ENCODE measurements at regions of chr2 and their contacts with region 1.

Region 1: GRCh38 chr2:84781942-84782716 is 98.8 kb downstream of the TRABD2A start:
- DNase-seq: peak; percentile 34 to 79
- ATAC-seq: peak; percentile 86 to 89 (median 86)
- H3K4me3 ChIP-seq: no peak overlapping the region
- H3K4me3 Mint-ChIP-seq: peak overlapping the region; percentile 81
- H3K27ac ChIP-seq: peak overlapping the region; percentile 71
- H3K27ac Mint-ChIP-seq: peak overlapping the region; percentile 73 to 95
- H3K4me1 ChIP-seq: peaks cover 24% of the 10 kb centered on the region
- H3K4me1 Mint-ChIP-seq: peaks cover 69 to 71% of the 10 kb centered on the region in 2 donors
- H3K27me3 ChIP-seq: no peaks in the 10 kb centered on the region
- H3K27me3 Mint-ChIP-seq: no peaks in the 10 kb centered on the region
- CTCF ChIP-seq: no peak

Region 2: DNA sequence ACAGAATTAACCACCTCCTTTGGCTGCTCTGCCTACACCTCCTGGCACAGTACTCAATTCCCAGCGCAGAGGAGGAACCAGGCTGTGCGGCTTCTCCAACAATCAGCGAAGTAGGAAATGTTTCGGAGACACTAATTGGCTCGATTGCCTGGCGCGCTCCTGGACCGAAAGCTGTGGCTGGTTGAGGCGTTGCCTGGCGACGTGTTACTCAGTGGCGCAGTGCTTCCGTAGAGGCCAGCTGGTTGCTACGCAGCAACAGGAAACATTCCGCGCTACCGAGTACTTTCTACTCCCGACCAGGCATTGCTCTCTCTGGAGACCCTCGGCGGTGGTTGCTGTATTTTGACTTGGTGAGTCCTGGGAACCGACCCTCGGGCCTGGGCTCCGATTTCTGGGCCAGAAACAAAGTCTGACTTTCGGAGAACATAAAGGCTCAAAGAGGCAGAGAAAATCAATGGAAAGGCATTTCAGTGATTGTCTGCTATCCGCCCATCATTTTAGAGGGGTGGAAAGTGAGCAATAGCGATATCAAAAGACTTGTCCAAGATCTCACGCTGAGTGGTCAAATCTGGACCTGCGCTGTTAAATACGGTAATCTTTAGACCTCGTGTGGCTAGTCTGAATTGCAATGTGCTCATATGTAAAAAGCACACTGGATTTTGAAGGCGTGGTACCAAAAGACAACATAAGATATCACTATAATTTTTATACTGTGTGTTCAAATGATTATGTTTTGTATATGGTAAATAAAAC is 265.7 kb before region 1 on chr2 and contains the start of gene DNAH6:
- intact Hi-C with region 1: loop called (anchors 5 kb)
- DNase-seq: peak; percentile 78 to 95
- ATAC-seq: peak; percentile 96 to 99 (median 97)
- H3K4me3 ChIP-seq: peak within 1 kb of the TSS; percentile 25
- H3K4me3 Mint-ChIP-seq: peak within 1 kb of the TSS; percentile 75
- H3K27ac ChIP-seq: no peak within 1 kb of the TSS
- H3K27ac Mint-ChIP-seq: peak within 1 kb of the TSS; percentile 44 to 66
- H3K4me1 ChIP-seq: peaks cover 10% of the 10 kb centered on the region
- H3K4me1 Mint-ChIP-seq: peaks cover 13 to 15% of the 10 kb centered on the region in 2 donors
- H3K27me3 ChIP-seq: peaks cover 3% of the 10 kb centered on the region
- H3K27me3 Mint-ChIP-seq: peaks cover 30 to 49% of the 10 kb centered on the region in 2 donors
- CTCF ChIP-seq: no peak
- total RNA-seq, gene DNAH6: 0.05 to 0.60 (median 0.32) TPM

Region 3: DNA sequence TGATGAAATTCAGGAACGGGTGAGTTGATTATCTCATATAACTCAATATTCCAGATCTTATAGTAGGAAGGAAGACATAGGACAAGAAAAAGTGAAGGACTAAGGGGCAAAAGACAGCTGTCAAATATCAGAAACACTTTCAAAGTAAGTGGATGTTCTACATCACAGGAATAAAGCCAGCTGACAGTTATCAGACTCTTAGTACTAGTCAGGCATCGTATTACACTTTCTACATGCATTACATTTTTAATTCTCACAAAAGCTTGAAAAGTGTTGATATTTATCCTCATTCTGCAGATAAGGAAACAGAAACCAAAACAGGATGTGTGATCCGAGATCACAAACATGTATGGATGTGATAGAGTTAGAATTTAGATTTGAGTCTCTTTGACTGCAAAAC is 202.5 kb before region 1 on chr2:
- intact Hi-C with region 1: no loop called
- DNase-seq: no peak
- ATAC-seq: no peak
- H3K4me3 ChIP-seq: no peak overlapping the region
- H3K4me3 Mint-ChIP-seq: no peak overlapping the region
- H3K27ac ChIP-seq: no peak overlapping the region
- H3K27ac Mint-ChIP-seq: no peak overlapping the region
- H3K4me1 ChIP-seq: no peaks in the 10 kb centered on the region
- H3K4me1 Mint-ChIP-seq: no peaks in the 10 kb centered on the region
- H3K27me3 ChIP-seq: no peaks in the 10 kb centered on the region
- H3K27me3 Mint-ChIP-seq: peaks cover 0 to 2% of the 10 kb centered on the region in 2 donors
- CTCF ChIP-seq: no peak

Region 4: DNA sequence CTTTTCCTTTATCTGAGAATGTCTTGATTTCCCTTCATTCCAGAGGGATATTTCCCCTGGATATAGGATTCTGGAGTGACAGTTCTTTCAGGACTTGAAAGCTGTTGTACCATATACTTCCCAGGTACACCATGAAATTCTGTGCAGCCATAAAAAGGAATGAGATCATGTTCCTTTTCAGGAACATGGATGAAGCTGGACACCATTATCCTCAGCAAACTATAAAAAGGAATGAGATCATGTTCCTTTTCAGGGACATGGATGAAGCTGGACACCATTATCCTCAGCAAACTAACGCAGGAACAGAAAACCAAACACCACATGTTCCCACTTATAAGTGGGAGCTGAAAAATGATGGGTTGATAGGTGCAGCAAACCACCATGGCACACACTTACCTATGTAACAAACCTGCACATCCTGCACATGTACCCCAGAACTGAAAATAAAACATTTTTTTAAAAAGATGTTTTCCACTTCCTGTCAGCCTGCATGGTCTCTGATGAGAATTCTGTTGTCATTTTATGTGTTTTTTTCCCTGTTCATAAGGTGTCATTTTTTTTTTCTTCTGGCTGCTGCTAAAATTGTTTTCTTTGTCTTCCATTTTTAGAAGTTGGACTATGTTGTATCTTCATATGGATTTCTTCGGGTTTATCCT is 132.5 kb before region 1 on chr2:
- intact Hi-C with region 1: loop called (anchors 5 kb)
- DNase-seq: peak in 1 of 2 donors; percentile 28
- ATAC-seq: no peak
- H3K4me3 ChIP-seq: no peak overlapping the region
- H3K4me3 Mint-ChIP-seq: peak overlapping the region; percentile 14
- H3K27ac ChIP-seq: no peak overlapping the region
- H3K27ac Mint-ChIP-seq: peak overlapping the region; percentile 27 to 73
- H3K4me1 ChIP-seq: peaks cover 16% of the 10 kb centered on the region
- H3K4me1 Mint-ChIP-seq: peaks cover 56 to 59% of the 10 kb centered on the region in 2 donors
- H3K27me3 ChIP-seq: no peaks in the 10 kb centered on the region
- H3K27me3 Mint-ChIP-seq: no peaks in the 10 kb centered on the region
- CTCF ChIP-seq: no peak

Region 5: GRCh38 chr2:84846041-84846663 is 64.0 kb after region 1 on chr2:
- intact Hi-C with region 1: loop called (anchors 2 kb)
- DNase-seq: peak in 1 of 2 donors; percentile 82
- ATAC-seq: peak; percentile 63 to 72 (median 65)
- H3K4me3 ChIP-seq: no peak overlapping the region
- H3K4me3 Mint-ChIP-seq: peak overlapping the region; percentile 57
- H3K27ac ChIP-seq: peak overlapping the region; percentile 83
- H3K27ac Mint-ChIP-seq: peak overlapping the region; percentile 88 to 95
- H3K4me1 ChIP-seq: peaks cover 83% of the 10 kb centered on the region
- H3K4me1 Mint-ChIP-seq: peaks cover 66 to 68% of the 10 kb centered on the region in 2 donors
- H3K27me3 ChIP-seq: no peaks in the 10 kb centered on the region
- H3K27me3 Mint-ChIP-seq: no peaks in the 10 kb centered on the region
- CTCF ChIP-seq: no peak

Region 6: GRCh38 chr2:84881581-84882414 is 99.7 kb after region 1 on chr2:
- intact Hi-C with region 1: loop called (anchors 10 kb)
- DNase-seq: peak; percentile 76 to 93
- ATAC-seq: peak; percentile 87 to 89 (median 88)
- H3K4me3 ChIP-seq: peak overlapping the region; percentile 55
- H3K4me3 Mint-ChIP-seq: peak overlapping the region; percentile 98
- H3K27ac ChIP-seq: peak overlapping the region; percentile 52
- H3K27ac Mint-ChIP-seq: peak overlapping the region; percentile 21 to 71
- H3K4me1 ChIP-seq: peaks cover 29% of the 10 kb centered on the region
- H3K4me1 Mint-ChIP-seq: peaks cover 34 to 37% of the 10 kb centered on the region in 2 donors
- H3K27me3 ChIP-seq: peaks cover 8% of the 10 kb centered on the region
- H3K27me3 Mint-ChIP-seq: peaks cover 9 to 24% of the 10 kb centered on the region in 2 donors
- CTCF ChIP-seq: peak; percentile 77

Region 7: DNA sequence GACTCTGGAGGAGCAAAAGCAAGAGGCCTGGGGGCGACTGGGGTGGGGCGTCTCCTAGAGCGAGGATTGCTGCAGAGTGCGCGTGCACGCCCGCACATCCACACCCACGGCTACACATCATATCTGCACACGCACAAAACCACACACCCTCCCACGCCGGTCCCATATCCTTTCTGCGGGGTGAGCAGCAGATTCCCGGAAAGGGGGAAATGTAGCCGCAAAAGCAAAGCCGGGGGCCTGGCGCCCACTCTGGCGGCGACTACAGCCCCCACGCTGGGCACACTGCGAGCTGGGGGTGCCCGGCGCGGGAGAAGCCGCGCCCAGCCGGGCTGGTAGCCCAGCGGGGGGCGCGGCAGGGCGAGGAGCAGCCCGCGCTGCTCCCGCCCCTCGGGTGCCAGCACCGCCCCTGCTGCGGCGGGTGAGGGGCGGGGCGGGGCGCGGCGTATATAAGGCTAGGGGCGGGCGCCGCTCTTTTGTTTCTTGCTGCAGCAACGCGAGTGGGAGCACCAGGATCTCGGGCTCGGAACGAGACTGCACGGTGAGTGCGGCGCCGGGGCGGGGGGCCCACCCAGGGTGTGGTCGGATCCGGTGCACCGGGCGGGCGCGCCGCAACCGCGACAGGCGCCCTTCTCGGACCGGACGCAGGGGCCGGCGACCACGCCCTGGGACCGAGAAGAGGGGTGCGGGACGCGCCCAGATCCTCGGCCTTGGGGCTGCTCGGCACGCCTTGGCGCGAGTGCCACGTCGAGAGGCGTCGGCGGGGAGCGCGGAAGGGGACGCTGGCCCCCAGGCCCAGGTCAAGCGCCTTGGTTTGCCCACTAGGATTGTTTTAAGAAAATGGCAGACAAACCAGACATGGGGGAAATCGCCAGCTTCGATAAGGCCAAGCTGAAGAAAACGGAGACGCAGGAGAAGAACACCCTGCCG is 123.3 kb after region 1 on chr2 and contains the start of gene TMSB10:
- intact Hi-C with region 1: loop called (anchors 5 kb)
- DNase-seq: peak; percentile 88 to 92
- ATAC-seq: peak; percentile 83 to 89 (median 84)
- H3K4me3 ChIP-seq: peak within 1 kb of the TSS; percentile 83
- H3K4me3 Mint-ChIP-seq: peak within 1 kb of the TSS; percentile 94
- H3K27ac ChIP-seq: peak within 1 kb of the TSS; percentile 81
- H3K27ac Mint-ChIP-seq: peak within 1 kb of the TSS; percentile 85 to 86
- H3K4me1 ChIP-seq: peaks cover 52% of the 10 kb centered on the region
- H3K4me1 Mint-ChIP-seq: peaks cover 55 to 76% of the 10 kb centered on the region in 2 donors
- H3K27me3 ChIP-seq: no peaks in the 10 kb centered on the region
- H3K27me3 Mint-ChIP-seq: no peaks in the 10 kb centered on the region
- CTCF ChIP-seq: no peak
- total RNA-seq, gene TMSB10: 1,247 to 1,683 (median 1,557) TPM

Region 8: GRCh38 chr2:85199698-85200097 is 417.6 kb after region 1 on chr2:
- intact Hi-C with region 1: no loop called
- DNase-seq: no peak
- ATAC-seq: no peak
- H3K4me3 ChIP-seq: no peak overlapping the region
- H3K4me3 Mint-ChIP-seq: no peak overlapping the region
- H3K27ac ChIP-seq: no peak overlapping the region
- H3K27ac Mint-ChIP-seq: no peak overlapping the region
- H3K4me1 ChIP-seq: no peaks in the 10 kb centered on the region
- H3K4me1 Mint-ChIP-seq: no peaks in the 10 kb centered on the region
- H3K27me3 ChIP-seq: no peaks in the 10 kb centered on the region
- H3K27me3 Mint-ChIP-seq: peaks cover 9 to 13% of the 10 kb centered on the region in 2 donors
- CTCF ChIP-seq: no peak

Region 9: DNA sequence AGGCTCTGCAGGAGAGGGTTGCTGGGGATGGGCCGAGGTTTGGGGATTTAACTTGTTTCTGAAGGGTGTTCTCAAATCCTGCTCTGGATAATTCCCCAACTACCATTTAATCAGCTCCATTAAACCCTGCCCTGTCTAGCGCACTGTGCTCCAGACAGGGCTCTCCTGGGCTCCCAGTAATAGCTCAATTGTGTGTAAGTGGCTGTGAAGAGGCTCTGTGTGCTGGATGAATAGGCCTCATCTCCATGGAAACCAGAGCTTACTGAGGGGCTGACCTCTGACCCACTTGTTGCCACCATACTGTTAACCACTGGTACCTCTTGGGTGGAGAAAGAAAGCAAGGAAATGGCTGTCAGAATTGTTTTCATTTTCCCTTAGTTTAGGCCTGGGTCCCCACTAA is 452.7 kb after region 1 on chr2:
- intact Hi-C with region 1: no loop called
- DNase-seq: no peak
- ATAC-seq: peak in 1 of 3 donors; percentile 66
- H3K4me3 ChIP-seq: no peak overlapping the region
- H3K4me3 Mint-ChIP-seq: no peak overlapping the region
- H3K27ac ChIP-seq: no peak overlapping the region
- H3K27ac Mint-ChIP-seq: no peak overlapping the region
- H3K4me1 ChIP-seq: no peaks in the 10 kb centered on the region
- H3K4me1 Mint-ChIP-seq: peaks cover 7 to 12% of the 10 kb centered on the region in 2 donors
- H3K27me3 ChIP-seq: no peaks in the 10 kb centered on the region
- H3K27me3 Mint-ChIP-seq: peaks cover 12 to 20% of the 10 kb centered on the region in 2 donors
- CTCF ChIP-seq: no peak

Region 10: GRCh38 chr2:85511008-85511811 is 729.1 kb after region 1 on chr2:
- intact Hi-C with region 1: no loop called
- DNase-seq: no peak
- ATAC-seq: no peak
- H3K4me3 ChIP-seq: no peak overlapping the region
- H3K4me3 Mint-ChIP-seq: no peak overlapping the region
- H3K27ac ChIP-seq: no peak overlapping the region
- H3K27ac Mint-ChIP-seq: no peak overlapping the region
- H3K4me1 ChIP-seq: no peaks in the 10 kb centered on the region
- H3K4me1 Mint-ChIP-seq: no peaks in the 10 kb centered on the region
- H3K27me3 ChIP-seq: no peaks in the 10 kb centered on the region
- H3K27me3 Mint-ChIP-seq: no peaks in the 10 kb centered on the region
- CTCF ChIP-seq: no peak

Measured in natural killer cell (primary cell).